ENCODE measurements at regions of chr5 and their contacts with region 1.

Region 1: DNA sequence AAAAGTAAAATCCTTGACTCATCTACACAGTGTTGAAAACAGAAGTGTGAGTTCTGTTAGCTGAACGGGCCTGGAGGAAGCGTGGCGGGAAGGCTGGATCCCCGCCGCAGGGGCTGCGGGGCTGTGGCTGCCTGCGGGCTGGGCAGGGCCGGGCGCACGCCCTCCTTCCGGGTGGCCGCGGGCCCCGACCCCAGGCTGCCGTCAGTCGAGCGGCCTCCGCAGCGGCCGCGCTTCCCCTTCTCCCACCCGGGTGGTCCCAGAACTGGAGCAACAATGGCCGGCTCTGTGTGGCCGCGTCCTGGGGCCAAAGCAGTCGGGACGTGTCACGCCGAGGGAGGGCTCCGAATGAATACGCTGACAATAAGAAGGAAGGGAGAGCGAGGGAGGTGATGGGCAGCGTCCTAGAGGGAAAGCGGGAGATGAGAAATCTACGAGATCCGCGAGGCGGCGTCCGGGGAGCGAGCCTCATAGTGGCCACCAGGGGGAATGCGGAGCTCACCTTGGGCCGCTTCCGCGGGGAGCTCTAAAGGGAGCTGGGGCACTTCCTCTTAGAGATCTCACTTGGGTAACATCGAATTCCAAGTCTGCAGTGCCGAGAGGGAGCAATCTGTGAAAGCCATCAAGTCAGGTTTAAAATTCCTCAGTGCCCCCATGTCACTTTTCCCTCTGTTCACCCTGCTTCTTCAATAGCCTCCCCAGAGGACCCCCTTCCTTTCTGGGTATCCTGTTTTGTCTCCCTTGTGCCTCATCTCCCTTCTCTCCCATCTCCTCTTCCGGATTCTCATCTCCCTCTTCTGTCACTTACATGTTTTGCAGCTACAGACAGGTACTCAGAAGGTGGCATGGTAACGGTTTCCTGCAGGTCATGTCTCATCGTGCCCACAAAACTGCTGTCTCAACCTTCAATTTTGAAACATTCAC is 83.9 kb downstream of the SLC1A3 start:
- DNase-seq: peak; percentile 75 to 84
- ATAC-seq: peak; percentile 70 to 87 (median 78)
- H3K4me3 ChIP-seq: peak overlapping the region; percentile 65
- H3K27ac ChIP-seq: peak overlapping the region; percentile 19
- H3K4me1 ChIP-seq: peaks cover 4% of the 10 kb centered on the region
- H3K27me3 ChIP-seq: no peaks in the 10 kb centered on the region
- CTCF ChIP-seq: peak; percentile 78

Region 2: DNA sequence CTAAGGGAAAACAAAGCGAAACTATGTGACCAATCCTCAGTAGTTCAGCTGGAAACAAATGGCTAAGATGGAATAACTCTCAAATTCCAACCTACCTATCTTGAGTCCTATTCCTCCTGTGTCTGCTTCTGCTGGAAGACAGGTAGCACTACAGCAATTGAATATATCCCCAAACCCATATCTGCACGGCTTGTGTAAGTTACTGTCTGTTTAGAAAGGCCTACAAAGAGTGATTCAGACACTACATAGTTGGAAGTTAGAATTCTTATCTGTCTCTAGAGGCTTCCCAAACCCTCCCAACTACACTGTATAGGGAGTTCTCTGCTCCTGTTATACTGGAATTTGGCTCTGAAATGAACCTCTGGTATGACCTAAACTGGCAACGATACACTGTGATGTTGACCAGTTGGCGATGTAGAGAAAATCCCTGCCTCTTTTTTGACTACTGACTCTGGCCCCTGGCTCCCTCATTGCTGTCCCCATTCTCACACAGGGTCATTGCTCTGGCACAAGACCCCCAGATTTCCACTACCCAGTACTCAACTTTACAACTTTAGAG is 426.0 kb before region 1 on chr5:
- intact Hi-C with region 1: loop called (anchors 5 to 10 kb)
- DNase-seq: no peak
- ATAC-seq: no peak
- H3K4me3 ChIP-seq: no peak overlapping the region
- H3K27ac ChIP-seq: no peak overlapping the region
- H3K4me1 ChIP-seq: no peaks in the 10 kb centered on the region
- H3K27me3 ChIP-seq: no peaks in the 10 kb centered on the region
- CTCF ChIP-seq: no peak

Region 3: DNA sequence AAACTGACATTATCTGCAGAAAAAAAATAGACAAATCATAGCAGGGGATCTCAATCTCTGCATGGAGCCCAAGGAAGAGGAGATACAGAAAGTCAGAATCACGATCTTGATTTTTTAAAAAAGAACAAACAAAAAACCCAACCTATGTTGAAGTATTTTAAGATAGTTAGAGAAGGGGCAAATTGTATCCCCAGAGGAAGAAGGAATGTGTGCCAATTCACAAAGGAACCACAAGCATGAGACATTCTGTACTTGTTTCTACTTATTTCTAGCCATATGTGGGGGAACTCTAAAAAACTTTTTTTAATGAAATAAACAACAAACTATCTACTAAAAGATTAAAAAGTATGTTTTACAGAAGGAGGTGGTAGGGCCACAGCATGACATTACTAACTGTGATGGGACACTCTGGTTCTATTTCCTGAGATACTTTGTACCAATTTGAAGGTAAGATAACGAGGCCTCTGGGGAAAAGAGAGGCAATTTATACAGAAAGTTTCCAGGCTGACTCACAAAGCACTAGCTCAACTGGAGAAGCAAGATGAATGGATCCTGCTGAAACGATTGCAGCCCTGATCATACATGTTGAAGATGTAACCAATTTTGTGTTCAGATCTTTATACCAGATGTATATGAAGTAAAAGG is 411.1 kb before region 1 on chr5:
- intact Hi-C with region 1: no loop called
- DNase-seq: no peak
- ATAC-seq: no peak
- H3K4me3 ChIP-seq: no peak overlapping the region
- H3K27ac ChIP-seq: no peak overlapping the region
- H3K4me1 ChIP-seq: peaks cover 16% of the 10 kb centered on the region
- H3K27me3 ChIP-seq: no peaks in the 10 kb centered on the region
- CTCF ChIP-seq: no peak

Region 4: DNA sequence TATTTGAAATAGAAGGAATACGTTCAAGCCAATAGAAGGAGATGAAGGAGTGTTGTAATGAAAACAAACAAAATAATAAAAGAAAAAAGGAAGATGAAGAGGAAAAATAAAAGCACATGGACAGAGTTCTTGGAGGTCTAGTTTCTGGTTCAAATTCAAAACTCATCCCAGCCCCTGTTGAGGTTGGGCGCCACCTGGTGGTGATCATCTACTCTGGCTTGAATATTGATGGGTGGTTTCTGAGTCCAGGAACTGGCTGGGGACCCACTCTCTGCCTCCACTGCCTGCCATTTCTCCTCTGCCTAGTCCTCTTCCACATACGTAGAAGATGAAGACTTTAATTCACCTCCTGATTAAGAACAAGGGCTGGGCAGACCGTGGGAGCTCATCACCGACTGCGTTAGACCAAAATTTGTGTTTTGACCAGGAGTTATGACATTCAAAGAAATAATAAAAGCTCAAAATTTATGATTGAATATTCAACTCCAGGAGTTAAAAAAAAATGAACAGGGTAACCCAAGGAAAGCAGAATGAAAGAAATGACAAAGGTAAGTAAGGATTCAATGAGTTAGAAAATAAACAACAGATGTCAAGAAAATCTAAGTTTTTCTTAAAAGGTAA is 182.9 kb before region 1 on chr5:
- intact Hi-C with region 1: loop called in 1 of 2 experiments (anchors 2 kb)
- DNase-seq: peak; percentile 79 to 85
- ATAC-seq: peak; percentile 57 to 74 (median 64)
- H3K4me3 ChIP-seq: no peak overlapping the region
- H3K27ac ChIP-seq: no peak overlapping the region
- H3K4me1 ChIP-seq: no peaks in the 10 kb centered on the region
- H3K27me3 ChIP-seq: no peaks in the 10 kb centered on the region
- CTCF ChIP-seq: peak; percentile 84

Region 5: GRCh38 chr5:36535378-36535777 is 154.9 kb before region 1 on chr5:
- intact Hi-C with region 1: loop called in 1 of 2 experiments (anchors 10 kb)
- DNase-seq: peak; percentile 30 to 69
- ATAC-seq: peak; percentile 93 to 99 (median 96)
- H3K4me3 ChIP-seq: no peak overlapping the region
- H3K27ac ChIP-seq: peak overlapping the region; percentile 24
- H3K4me1 ChIP-seq: peaks cover 16% of the 10 kb centered on the region
- H3K27me3 ChIP-seq: no peaks in the 10 kb centered on the region
- CTCF ChIP-seq: no peak

Region 6: DNA sequence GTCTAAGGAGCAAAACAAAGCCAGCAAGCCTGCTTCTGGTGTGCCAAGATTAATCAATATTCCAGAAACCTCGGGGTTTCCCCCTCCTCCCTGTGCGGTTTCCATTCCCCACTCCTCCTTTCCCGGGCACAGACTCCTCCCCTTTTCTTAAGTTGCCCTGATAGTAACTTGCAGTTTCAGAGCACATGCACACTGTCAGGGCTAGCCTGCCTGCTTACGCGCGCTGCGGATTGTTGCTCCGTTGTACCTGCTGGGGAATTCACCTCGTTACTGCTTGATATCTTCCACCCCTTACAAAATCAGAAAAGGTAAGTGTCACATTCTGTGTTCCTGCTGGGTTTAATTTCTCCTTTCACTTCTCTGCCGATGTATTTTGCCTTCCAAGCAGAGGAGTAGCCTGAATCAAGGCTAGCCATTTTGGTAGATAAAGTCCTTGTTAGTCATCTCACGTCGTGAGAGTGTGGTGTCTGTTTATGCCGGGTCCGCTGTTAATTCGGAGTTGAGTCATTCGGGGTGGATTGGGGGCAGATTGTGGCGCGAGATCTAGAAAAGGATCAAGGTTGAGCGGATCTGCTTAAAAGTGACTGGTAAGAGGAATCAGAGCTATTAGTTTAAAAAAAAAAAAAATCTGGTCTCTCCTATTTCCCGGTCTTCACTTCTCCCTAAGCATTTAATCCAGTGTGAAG is 83.7 kb before region 1 on chr5 and contains the start of gene SLC1A3:
- intact Hi-C with region 1: loop called in 1 of 2 experiments (anchors 5 kb)
- DNase-seq: peak; percentile 34 to 69
- ATAC-seq: peak; percentile 88 to 92 (median 90)
- H3K4me3 ChIP-seq: peak within 1 kb of the TSS; percentile 81
- H3K27ac ChIP-seq: peak within 1 kb of the TSS; percentile 88
- H3K4me1 ChIP-seq: peaks cover 13% of the 10 kb centered on the region
- H3K27me3 ChIP-seq: no peaks in the 10 kb centered on the region
- CTCF ChIP-seq: no peak
- total RNA-seq, gene SLC1A3: 12.7 to 25.3 (median 21.5) TPM